ENCODE measurements at regions of chr14 and their contacts with region 1.

Region 1: GRCh38 chr14:32576088-32576795 is 247.1 kb downstream of the AKAP6 start:
- DNase-seq: peak in 4 of 5 donors; percentile 36 to 46 (median 38)
- H3K4me3 ChIP-seq: no peak overlapping the region
- H3K4me3 Mint-ChIP-seq: no peak overlapping the region
- H3K27ac ChIP-seq: no peak overlapping the region
- H3K27ac Mint-ChIP-seq: no peak overlapping the region
- H3K4me1 ChIP-seq: no peaks in the 10 kb centered on the region
- H3K4me1 Mint-ChIP-seq: no peaks in the 10 kb centered on the region
- H3K27me3 ChIP-seq: no peaks in the 10 kb centered on the region
- H3K27me3 Mint-ChIP-seq: peaks cover 0 to 3% of the 10 kb centered on the region in 2 donors

Region 2: GRCh38 chr14:32134448-32135070 is 441.7 kb before region 1 on chr14:
- CTCF ChIA-PET with region 1: no interaction called
- POLR2A ChIA-PET with region 1: no interaction called
- intact Hi-C with region 1: no loop called
- DNase-seq: no peak
- H3K4me3 ChIP-seq: no peak overlapping the region
- H3K4me3 Mint-ChIP-seq: no peak overlapping the region
- H3K27ac ChIP-seq: no peak overlapping the region
- H3K27ac Mint-ChIP-seq: peak overlapping the region in 1 of 7 donors; percentile 3
- H3K4me1 ChIP-seq: no peaks in the 10 kb centered on the region
- H3K4me1 Mint-ChIP-seq: peaks cover 9 to 15% (median 13%) of the 10 kb centered on the region in 4 donors
- H3K27me3 ChIP-seq: no peaks in the 10 kb centered on the region
- H3K27me3 Mint-ChIP-seq: no peaks in the 10 kb centered on the region

Region 3: GRCh38 chr14:32524609-32525375 is 51.5 kb before region 1 on chr14:
- CTCF ChIA-PET with region 1: no interaction called
- POLR2A ChIA-PET with region 1: no interaction called
- intact Hi-C with region 1: loop called (anchors 2 kb)
- DNase-seq: no peak
- H3K4me3 ChIP-seq: no peak overlapping the region
- H3K4me3 Mint-ChIP-seq: no peak overlapping the region
- H3K27ac ChIP-seq: no peak overlapping the region
- H3K27ac Mint-ChIP-seq: no peak overlapping the region
- H3K4me1 ChIP-seq: no peaks in the 10 kb centered on the region
- H3K4me1 Mint-ChIP-seq: no peaks in the 10 kb centered on the region
- H3K27me3 ChIP-seq: no peaks in the 10 kb centered on the region
- H3K27me3 Mint-ChIP-seq: peaks cover 0 to 1% of the 10 kb centered on the region in 2 donors

Region 4: DNA sequence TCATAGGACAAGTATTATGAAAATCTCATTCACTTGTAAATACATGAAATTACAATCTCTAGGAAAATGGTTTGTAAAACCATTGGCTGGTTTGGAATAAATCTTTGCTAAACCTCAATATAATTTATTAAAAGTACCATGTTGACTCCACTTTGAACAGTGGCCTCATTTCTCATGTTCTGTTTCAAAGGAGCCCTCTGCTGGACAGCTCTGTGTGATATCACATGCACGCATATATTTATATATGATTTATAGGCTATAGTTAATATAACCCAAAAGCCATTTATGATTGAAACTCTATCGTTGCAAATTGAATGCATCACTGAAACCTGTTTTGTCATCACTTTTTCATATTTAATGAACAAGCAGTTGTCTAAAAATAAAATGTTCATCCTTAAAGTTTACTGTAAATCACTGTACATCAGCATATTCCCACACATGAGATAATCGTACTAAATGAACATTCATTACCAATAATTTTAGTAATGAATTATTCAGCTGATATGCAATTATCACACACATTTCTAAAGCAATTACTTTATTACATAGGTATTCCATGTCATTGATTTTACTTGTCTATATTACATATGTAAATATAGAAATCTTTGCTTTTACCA is 856.3 kb after region 1 on chr14:
- CTCF ChIA-PET with region 1: no interaction called
- POLR2A ChIA-PET with region 1: no interaction called
- intact Hi-C with region 1: loop called (anchors 2 kb)
- DNase-seq: no peak
- H3K4me3 ChIP-seq: no peak overlapping the region
- H3K4me3 Mint-ChIP-seq: no peak overlapping the region
- H3K27ac ChIP-seq: no peak overlapping the region
- H3K27ac Mint-ChIP-seq: no peak overlapping the region
- H3K4me1 ChIP-seq: peaks cover 10% of the 10 kb centered on the region
- H3K4me1 Mint-ChIP-seq: peaks cover 6 to 11% (median 9%) of the 10 kb centered on the region in 4 donors
- H3K27me3 ChIP-seq: no peaks in the 10 kb centered on the region
- H3K27me3 Mint-ChIP-seq: no peaks in the 10 kb centered on the region

Measured in CD4-positive, alpha-beta memory T cell (primary cell).